ENCODE measurements at regions of chr6 and their contacts with region 1.

Region 1: GRCh38 chr6:37600287-37600916 is 97.3 kb downstream of the MDGA1 start:
- DNase-seq: no peak
- ATAC-seq: no peak
- H3K4me3 ChIP-seq: no peak overlapping the region
- H3K27ac ChIP-seq: no peak overlapping the region
- H3K4me1 ChIP-seq: peaks cover 4% of the 10 kb centered on the region
- H3K27me3 ChIP-seq: peaks cover 44% of the 10 kb centered on the region
- CTCF ChIP-seq: no peak
- POLR2A ChIP-seq: no peak
- RAD21 ChIP-seq: no peak

Region 2: GRCh38 chr6:37643851-37644672 is 43.7 kb after region 1 on chr6:
- CTCF ChIA-PET with region 1: no interaction called
- POLR2A ChIA-PET with region 1: no interaction called
- dilution Hi-C with region 1: no loop called
- in situ Hi-C with region 1: no loop called
- intact Hi-C with region 1: no loop called
- DNase-seq: peak; percentile 10
- ATAC-seq: no peak
- H3K4me3 ChIP-seq: no peak overlapping the region
- H3K27ac ChIP-seq: no peak overlapping the region
- H3K4me1 ChIP-seq: no peaks in the 10 kb centered on the region
- H3K27me3 ChIP-seq: peaks cover 1% of the 10 kb centered on the region; the same call in 1 of the 2 replicates
- CTCF ChIP-seq: no peak
- POLR2A ChIP-seq: no peak
- RAD21 ChIP-seq: no peak

Region 3: GRCh38 chr6:38702558-38703397 is 1102.4 kb after region 1 on chr6 and contains the start of gene GLO1:
- CTCF ChIA-PET with region 1: no interaction called
- POLR2A ChIA-PET with region 1: interaction called, 13 read pairs
- dilution Hi-C with region 1: no loop called
- in situ Hi-C with region 1: no loop called
- intact Hi-C with region 1: no loop called
- DNase-seq: peak; percentile 99
- ATAC-seq: peak; percentile 100
- H3K4me3 ChIP-seq: peak within 1 kb of the TSS; percentile 82
- H3K27ac ChIP-seq: peak within 1 kb of the TSS; percentile 59
- H3K4me1 ChIP-seq: no peaks in the 10 kb centered on the region
- H3K27me3 ChIP-seq: peaks cover 4% of the 10 kb centered on the region
- CTCF ChIP-seq: no peak
- POLR2A ChIP-seq: peak; percentile 94
- RAD21 ChIP-seq: no peak
- total RNA-seq, gene GLO1: 111 and 177 TPM in 2 replicates